ENCODE measurements at regions of chr4 and their contacts with region 1.

Region 1: DNA sequence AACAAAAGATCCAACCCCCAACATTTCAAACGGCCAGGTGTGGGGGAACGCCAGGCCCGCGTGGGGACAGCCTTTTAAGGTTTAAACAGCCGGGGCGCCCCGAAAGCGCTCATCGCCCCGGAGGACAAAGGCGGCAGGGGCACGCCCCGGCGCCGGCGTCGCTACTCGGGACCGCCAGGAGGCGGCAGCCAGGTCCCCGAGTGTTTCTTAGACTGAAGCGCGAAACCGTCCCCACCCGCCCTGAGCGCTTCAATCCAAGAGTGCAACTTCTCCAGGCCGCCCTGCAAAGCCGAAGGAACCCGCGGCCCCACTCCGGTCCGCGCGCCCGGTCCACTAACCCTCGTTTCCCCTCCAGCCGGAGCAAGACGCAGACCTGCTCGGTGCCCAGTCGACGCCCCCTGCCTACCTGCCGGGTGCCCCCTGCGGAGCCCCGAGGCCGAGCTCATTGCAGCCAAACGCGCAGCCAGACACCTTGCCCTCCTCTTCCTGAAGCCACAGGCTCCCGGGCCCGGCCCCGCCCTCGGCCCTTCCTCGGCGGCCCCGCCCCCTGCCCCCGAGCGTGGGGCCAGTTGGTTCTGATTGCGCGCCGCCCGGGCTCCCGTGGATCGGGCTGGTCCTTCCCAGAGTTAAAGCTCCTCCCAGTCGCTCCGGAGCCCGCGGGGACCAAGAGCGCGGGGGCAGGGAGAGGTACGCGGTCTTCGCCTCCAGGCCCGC is at the start of gene CASP6:
- DNase-seq: peak; percentile 52 to 87 (median 77)
- ATAC-seq: peak; percentile 89
- H3K4me3 ChIP-seq: peak within 1 kb of the TSS; percentile 72 to 85
- H3K4me3 Mint-ChIP-seq: peak within 1 kb of the TSS; percentile 94
- H3K27ac ChIP-seq: peak within 1 kb of the TSS; percentile 48 to 66
- H3K27ac Mint-ChIP-seq: peak within 1 kb of the TSS; percentile 94
- H3K4me1 ChIP-seq: peaks cover 15% of the 10 kb centered on the region
- H3K4me1 Mint-ChIP-seq: peaks cover 38% of the 10 kb centered on the region
- H3K27me3 ChIP-seq: no peaks in the 10 kb centered on the region
- H3K27me3 Mint-ChIP-seq: no peaks in the 10 kb centered on the region
- CTCF ChIP-seq: peak; percentile 67
- total RNA-seq, gene CASP6: 3.4 to 6.7 TPM

Region 2: GRCh38 chr4:108620101-108620932 is 1082.8 kb before region 1 on chr4 and contains the start of gene RPL34:
- CTCF ChIA-PET with region 1: no interaction called
- POLR2A ChIA-PET with region 1: no interaction called
- intact Hi-C with region 1: loop called in 1 of 2 experiments (anchors 5 kb)
- DNase-seq: peak; percentile 94 to 100 (median 97)
- ATAC-seq: peak; percentile 98
- H3K4me3 ChIP-seq: peak within 1 kb of the TSS; percentile 92 to 97
- H3K4me3 Mint-ChIP-seq: peak within 1 kb of the TSS; percentile 93
- H3K27ac ChIP-seq: peak within 1 kb of the TSS; percentile 85 to 90
- H3K27ac Mint-ChIP-seq: peak within 1 kb of the TSS; percentile 96
- H3K4me1 ChIP-seq: peaks cover 50% of the 10 kb centered on the region
- H3K4me1 Mint-ChIP-seq: peaks cover 58% of the 10 kb centered on the region
- H3K27me3 ChIP-seq: no peaks in the 10 kb centered on the region
- H3K27me3 Mint-ChIP-seq: no peaks in the 10 kb centered on the region
- CTCF ChIP-seq: no peak
- total RNA-seq, gene RPL34: 3,253 to 3,442 TPM

Region 3: GRCh38 chr4:108814326-108814725 is 888.8 kb before region 1 on chr4:
- CTCF ChIA-PET with region 1: no interaction called
- POLR2A ChIA-PET with region 1: no interaction called
- intact Hi-C with region 1: no loop called
- DNase-seq: no peak
- ATAC-seq: no peak
- H3K4me3 ChIP-seq: no peak overlapping the region
- H3K4me3 Mint-ChIP-seq: no peak overlapping the region
- H3K27ac ChIP-seq: no peak overlapping the region
- H3K27ac Mint-ChIP-seq: no peak overlapping the region
- H3K4me1 ChIP-seq: no peaks in the 10 kb centered on the region
- H3K4me1 Mint-ChIP-seq: no peaks in the 10 kb centered on the region
- H3K27me3 ChIP-seq: no peaks in the 10 kb centered on the region
- H3K27me3 Mint-ChIP-seq: peaks cover 6% of the 10 kb centered on the region
- CTCF ChIP-seq: no peak

Region 4: GRCh38 chr4:109648266-109648996 is 54.7 kb before region 1 on chr4:
- CTCF ChIA-PET with region 1: interaction called, 4 read pairs
- POLR2A ChIA-PET with region 1: no interaction called
- intact Hi-C with region 1: loop called in 1 of 2 experiments (anchors 5 kb)
- DNase-seq: peak in 4 of 9 experiments; percentile 23 to 87 (median 56)
- ATAC-seq: peak; percentile 85
- H3K4me3 ChIP-seq: peak overlapping the region in 1 of 2 experiments; percentile 29
- H3K4me3 Mint-ChIP-seq: peak overlapping the region; percentile 76
- H3K27ac ChIP-seq: peak overlapping the region; percentile 45 to 61
- H3K27ac Mint-ChIP-seq: peak overlapping the region; percentile 92
- H3K4me1 ChIP-seq: peaks cover 73% of the 10 kb centered on the region
- H3K4me1 Mint-ChIP-seq: peaks cover 41% of the 10 kb centered on the region
- H3K27me3 ChIP-seq: no peaks in the 10 kb centered on the region
- H3K27me3 Mint-ChIP-seq: no peaks in the 10 kb centered on the region
- CTCF ChIP-seq: no peak

Region 5: GRCh38 chr4:109729718-109730618 is 26.9 kb after region 1 on chr4 and contains the start of gene PLA2G12A:
- CTCF ChIA-PET with region 1: interaction called, 4 read pairs
- POLR2A ChIA-PET with region 1: interaction called, 4 read pairs
- intact Hi-C with region 1: loop called (anchors 1 kb)
- DNase-seq: peak; percentile 65 to 91 (median 81)
- ATAC-seq: peak; percentile 93
- H3K4me3 ChIP-seq: peak within 1 kb of the TSS; percentile 89 to 92
- H3K4me3 Mint-ChIP-seq: peak within 1 kb of the TSS; percentile 90
- H3K27ac ChIP-seq: peak within 1 kb of the TSS; percentile 69 to 78
- H3K27ac Mint-ChIP-seq: peak within 1 kb of the TSS; percentile 90
- H3K4me1 ChIP-seq: peaks cover 17% of the 10 kb centered on the region
- H3K4me1 Mint-ChIP-seq: peaks cover 27% of the 10 kb centered on the region
- H3K27me3 ChIP-seq: no peaks in the 10 kb centered on the region
- H3K27me3 Mint-ChIP-seq: no peaks in the 10 kb centered on the region
- CTCF ChIP-seq: no peak
- total RNA-seq, gene PLA2G12A: 7.8 to 10.2 TPM

Measured in CD8-positive, alpha-beta T cell (primary cell).